CD4-positive, alpha-beta memory T cell (primary cell): ENCODE measurements at regions of chr10 and their contacts with region 1.

Region 1: GRCh38 chr10:22475651-22476600 is 130.6 kb downstream of the SPAG6 start:
- DNase-seq: peak in 4 of 5 donors; percentile 9 to 19 (median 14)
- H3K4me3 ChIP-seq: peak overlapping the region in 1 of 2 donors; percentile 40
- H3K4me3 Mint-ChIP-seq: peak overlapping the region; percentile 74 to 92 (median 88)
- H3K27ac ChIP-seq: no peak overlapping the region
- H3K27ac Mint-ChIP-seq: peak overlapping the region in 1 of 7 donors; percentile 8
- H3K4me1 ChIP-seq: peaks cover 16% of the 10 kb centered on the region
- H3K4me1 Mint-ChIP-seq: peaks cover 5 to 21% (median 12%) of the 10 kb centered on the region in 4 donors
- H3K27me3 ChIP-seq: peaks cover 46% of the 10 kb centered on the region
- H3K27me3 Mint-ChIP-seq: peaks cover 43 to 59% of the 10 kb centered on the region in 2 donors

Region 2: DNA sequence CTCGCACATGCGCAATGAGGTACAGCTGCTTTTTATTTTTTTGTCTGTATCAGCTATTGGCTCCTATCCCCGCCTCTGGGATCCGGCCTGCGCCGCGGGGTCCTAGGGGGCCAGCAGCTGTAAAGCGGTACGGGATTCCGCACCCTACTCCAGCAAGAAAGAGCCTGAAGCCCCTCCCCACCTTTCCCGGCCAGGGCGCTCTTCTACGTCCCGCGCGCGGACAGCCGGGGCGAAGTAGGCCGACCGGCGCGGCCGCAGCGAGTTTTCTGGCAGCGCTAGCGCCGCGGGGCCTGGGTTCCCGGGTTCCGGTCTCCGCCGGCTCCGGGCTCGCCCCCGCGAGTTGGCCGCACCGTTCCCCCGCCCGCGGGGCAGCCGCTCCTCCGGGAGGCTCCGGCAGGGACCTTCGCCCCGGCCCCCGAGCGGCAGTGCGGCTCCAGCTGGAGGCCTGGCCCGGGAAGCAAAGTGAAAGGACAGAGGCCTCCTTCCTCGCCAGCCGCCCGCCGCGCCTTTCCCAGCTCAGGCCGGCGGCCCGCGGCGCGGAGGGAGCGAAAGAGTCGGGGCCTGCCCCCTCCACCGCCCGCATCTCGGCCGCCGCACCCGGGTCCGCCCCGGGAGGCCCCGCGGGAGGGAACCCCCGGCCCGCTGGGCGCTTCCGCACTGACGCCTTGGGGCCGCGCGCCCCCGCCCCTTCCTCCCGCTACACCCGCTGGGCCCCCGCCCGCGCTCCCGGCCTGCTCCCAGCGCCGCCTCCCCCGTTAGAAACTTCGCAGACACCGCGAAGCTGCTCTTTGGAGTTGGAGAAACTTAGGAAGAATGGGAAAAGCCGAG is 135.3 kb before region 1 on chr10:
- CTCF ChIA-PET with region 1: no interaction called
- POLR2A ChIA-PET with region 1: no interaction called
- intact Hi-C with region 1: loop called (anchors 5 kb)
- DNase-seq: peak; percentile 70 to 77 (median 74)
- H3K4me3 ChIP-seq: peak overlapping the region in 1 of 2 donors; percentile 52
- H3K4me3 Mint-ChIP-seq: peak overlapping the region; percentile 87 to 97 (median 90)
- H3K27ac ChIP-seq: peak overlapping the region; percentile 40
- H3K27ac Mint-ChIP-seq: peak overlapping the region; percentile 86 to 97 (median 93)
- H3K4me1 ChIP-seq: peaks cover 30% of the 10 kb centered on the region
- H3K4me1 Mint-ChIP-seq: peaks cover 9 to 45% (median 23%) of the 10 kb centered on the region in 4 donors
- H3K27me3 ChIP-seq: peaks cover 90% of the 10 kb centered on the region
- H3K27me3 Mint-ChIP-seq: peaks cover 45 to 61% of the 10 kb centered on the region in 2 donors

Region 3: GRCh38 chr10:22391600-22391999 is 84.3 kb before region 1 on chr10:
- CTCF ChIA-PET with region 1: no interaction called
- POLR2A ChIA-PET with region 1: no interaction called
- intact Hi-C with region 1: no loop called
- DNase-seq: no peak
- H3K4me3 ChIP-seq: no peak overlapping the region
- H3K4me3 Mint-ChIP-seq: no peak overlapping the region
- H3K27ac ChIP-seq: no peak overlapping the region
- H3K27ac Mint-ChIP-seq: no peak overlapping the region
- H3K4me1 ChIP-seq: no peaks in the 10 kb centered on the region
- H3K4me1 Mint-ChIP-seq: no peaks in the 10 kb centered on the region
- H3K27me3 ChIP-seq: no peaks in the 10 kb centered on the region
- H3K27me3 Mint-ChIP-seq: peaks cover 3 to 4% of the 10 kb centered on the region in 2 donors

Region 4: DNA sequence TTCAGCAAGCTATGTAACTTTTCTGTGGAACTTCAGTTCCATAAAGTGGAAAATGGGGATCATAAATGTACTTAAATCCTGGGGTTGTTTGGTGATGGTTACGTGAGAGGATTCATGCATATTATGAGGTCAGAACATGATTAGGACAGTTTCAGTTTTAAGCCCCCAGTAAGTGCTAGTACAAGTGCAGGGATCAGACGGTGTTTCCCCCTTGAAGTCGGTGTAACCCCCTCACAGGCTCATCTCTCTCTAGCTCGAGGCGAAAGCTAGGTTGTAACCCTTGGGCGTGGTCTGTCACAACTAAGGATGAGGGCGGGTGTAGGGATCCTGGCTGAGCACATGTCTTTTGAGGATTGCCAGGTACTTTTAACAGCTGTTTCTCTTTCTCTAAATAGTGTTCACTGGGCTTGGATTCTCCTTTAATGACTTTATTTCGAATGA is 45.9 kb before region 1 on chr10:
- CTCF ChIA-PET with region 1: no interaction called
- POLR2A ChIA-PET with region 1: no interaction called
- intact Hi-C with region 1: no loop called
- DNase-seq: no peak
- H3K4me3 ChIP-seq: no peak overlapping the region
- H3K4me3 Mint-ChIP-seq: no peak overlapping the region
- H3K27ac ChIP-seq: no peak overlapping the region
- H3K27ac Mint-ChIP-seq: no peak overlapping the region
- H3K4me1 ChIP-seq: no peaks in the 10 kb centered on the region
- H3K4me1 Mint-ChIP-seq: peaks cover 0 to 2% (median under 1%) of the 10 kb centered on the region in 4 donors
- H3K27me3 ChIP-seq: no peaks in the 10 kb centered on the region
- H3K27me3 Mint-ChIP-seq: peaks cover 9 to 12% of the 10 kb centered on the region in 2 donors

Region 5: DNA sequence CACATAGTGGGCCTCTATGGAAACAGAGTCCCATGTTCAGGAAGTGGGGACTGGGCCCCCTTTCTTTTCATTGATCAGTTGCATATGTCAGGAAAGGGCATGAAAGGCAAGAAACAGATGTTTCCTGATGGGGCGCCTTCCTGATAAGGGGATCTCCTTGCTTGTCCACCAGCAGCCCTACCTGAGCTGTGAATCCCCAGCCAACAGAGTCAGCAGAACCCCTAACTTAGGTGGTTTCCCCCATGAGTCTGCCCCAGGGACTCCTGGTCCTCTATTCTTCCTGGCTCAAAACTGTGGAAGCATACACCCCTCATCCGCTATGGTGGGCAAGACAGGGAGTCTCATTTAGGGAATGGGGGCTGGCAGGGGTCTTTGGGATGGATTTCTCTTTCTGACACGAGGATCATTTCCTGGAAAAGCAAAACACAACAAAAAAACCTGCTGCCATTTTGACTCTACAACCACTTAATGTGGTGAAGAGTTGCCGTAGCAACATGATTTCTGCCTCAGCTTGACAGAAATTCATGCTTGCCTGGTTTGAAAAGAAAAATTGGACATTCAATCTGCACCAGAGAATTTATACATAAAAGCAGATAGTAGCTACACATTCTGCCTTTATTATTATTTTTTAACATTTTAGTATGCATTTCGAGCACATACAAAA is 10.8 kb before region 1 on chr10:
- CTCF ChIA-PET with region 1: no interaction called
- POLR2A ChIA-PET with region 1: no interaction called
- intact Hi-C with region 1: no loop called
- DNase-seq: no peak
- H3K4me3 ChIP-seq: no peak overlapping the region
- H3K4me3 Mint-ChIP-seq: no peak overlapping the region
- H3K27ac ChIP-seq: no peak overlapping the region
- H3K27ac Mint-ChIP-seq: no peak overlapping the region
- H3K4me1 ChIP-seq: no peaks in the 10 kb centered on the region
- H3K4me1 Mint-ChIP-seq: no peaks in the 10 kb centered on the region
- H3K27me3 ChIP-seq: no peaks in the 10 kb centered on the region
- H3K27me3 Mint-ChIP-seq: peaks cover 3 to 4% of the 10 kb centered on the region in 2 donors